Esophagus muscularis mucosa (tissue), 4 donors: ENCODE measurements at regions of chr12 and their contacts with region 1.

Region 1: GRCh38 chr12:99043319-99043914 is 398.3 kb downstream of the APAF1 start:
- DNase-seq: no peak
- H3K4me3 ChIP-seq: no peak overlapping the region
- H3K27ac ChIP-seq: no peak overlapping the region
- H3K4me1 ChIP-seq: no peaks in the 10 kb centered on the region
- H3K27me3 ChIP-seq: no peaks in the 10 kb centered on the region
- CTCF ChIP-seq: peak; percentile 73 to 88 (median 82)
- EP300 ChIP-seq: no peak
- POLR2A ChIP-seq: no peak

Region 2: DNA sequence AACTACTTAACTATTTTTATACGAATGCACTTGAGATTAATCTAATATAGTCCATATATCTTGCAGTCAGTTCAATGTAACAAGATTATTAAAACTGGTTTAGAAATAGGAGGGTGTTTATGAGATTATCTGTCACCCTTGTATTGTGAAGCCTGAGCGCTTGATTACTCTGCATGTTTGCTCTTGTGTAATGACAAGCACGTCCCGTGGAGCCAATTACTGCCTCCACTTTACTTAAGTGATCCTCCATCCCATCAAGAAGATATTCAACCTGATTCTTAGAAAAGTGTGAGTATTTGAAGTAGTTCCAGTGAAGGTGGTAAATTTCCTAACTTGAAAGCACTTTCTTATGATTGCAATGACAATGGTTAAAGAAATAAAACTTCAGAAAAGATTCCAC is 188.9 kb after region 1 on chr12:
- intact Hi-C with region 1: no loop called
- DNase-seq: no peak
- H3K4me3 ChIP-seq: no peak overlapping the region
- H3K27ac ChIP-seq: no peak overlapping the region
- H3K4me1 ChIP-seq: no peaks in the 10 kb centered on the region
- H3K27me3 ChIP-seq: no peaks in the 10 kb centered on the region
- CTCF ChIP-seq: no peak
- EP300 ChIP-seq: no peak
- POLR2A ChIP-seq: no peak

Region 3: DNA sequence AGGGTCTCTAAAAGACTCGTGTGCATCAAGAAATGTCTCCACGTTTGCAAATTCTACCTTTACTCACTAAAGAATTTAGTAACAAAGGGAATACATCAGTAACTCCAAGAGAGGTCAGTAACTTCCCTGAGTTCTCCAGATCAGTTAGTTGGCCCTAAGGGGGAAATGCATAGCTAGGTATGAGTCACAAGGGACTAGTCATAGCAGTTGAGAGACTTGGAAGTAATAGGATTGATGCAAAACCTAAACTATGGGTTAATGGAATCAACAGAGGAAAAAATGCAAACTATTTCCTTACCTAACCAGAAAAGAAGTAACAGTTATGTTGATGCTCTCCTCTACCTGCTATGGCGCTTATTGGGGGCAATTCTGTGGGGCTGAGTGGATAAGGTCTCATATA is 455.3 kb after region 1 on chr12:
- intact Hi-C with region 1: no loop called
- DNase-seq: no peak
- H3K4me3 ChIP-seq: no peak overlapping the region
- H3K27ac ChIP-seq: no peak overlapping the region
- H3K4me1 ChIP-seq: no peaks in the 10 kb centered on the region
- H3K27me3 ChIP-seq: no peaks in the 10 kb centered on the region
- CTCF ChIP-seq: no peak
- EP300 ChIP-seq: no peak
- POLR2A ChIP-seq: no peak

Region 4: GRCh38 chr12:99767809-99768208 is 724.4 kb after region 1 on chr12:
- intact Hi-C with region 1: loop called (anchors 5 kb)
- DNase-seq: no peak
- H3K4me3 ChIP-seq: peak overlapping the region; percentile 22 to 39 (median 32)
- H3K27ac ChIP-seq: no peak overlapping the region
- H3K4me1 ChIP-seq: no peaks in the 10 kb centered on the region
- H3K27me3 ChIP-seq: no peaks in the 10 kb centered on the region
- CTCF ChIP-seq: peak; percentile 41 to 62 (median 60)
- EP300 ChIP-seq: no peak
- POLR2A ChIP-seq: no peak